Tibial artery (tissue), 4 donors: ENCODE measurements at regions of chr5 and their contacts with region 1.

Region 1: DNA sequence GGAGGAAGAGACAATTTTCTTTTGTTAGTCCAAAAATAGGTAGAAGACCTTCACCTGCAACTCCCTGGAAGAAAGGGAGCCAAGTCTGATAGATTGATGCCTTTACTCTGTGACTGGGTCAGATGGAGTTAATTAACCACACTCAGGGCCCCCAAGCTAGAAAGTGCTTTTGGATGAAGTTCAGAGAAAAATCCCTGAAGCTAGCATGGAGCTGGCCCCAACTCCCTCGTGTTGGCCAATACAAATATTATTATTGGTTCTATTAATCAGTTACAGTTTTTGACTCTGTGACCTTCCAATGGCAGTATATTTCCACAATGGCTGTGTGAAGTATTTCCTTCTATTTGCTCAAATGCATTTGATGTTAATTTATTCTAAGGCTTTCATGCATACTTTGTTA is 1753.5 kb downstream of the EFNA5 start:
- DNase-seq: no peak
- H3K4me3 ChIP-seq: no peak overlapping the region
- H3K27ac ChIP-seq: no peak overlapping the region
- H3K4me1 ChIP-seq: no peaks in the 10 kb centered on the region
- H3K27me3 ChIP-seq: no peaks in the 10 kb centered on the region
- CTCF ChIP-seq: no peak

Region 2: DNA sequence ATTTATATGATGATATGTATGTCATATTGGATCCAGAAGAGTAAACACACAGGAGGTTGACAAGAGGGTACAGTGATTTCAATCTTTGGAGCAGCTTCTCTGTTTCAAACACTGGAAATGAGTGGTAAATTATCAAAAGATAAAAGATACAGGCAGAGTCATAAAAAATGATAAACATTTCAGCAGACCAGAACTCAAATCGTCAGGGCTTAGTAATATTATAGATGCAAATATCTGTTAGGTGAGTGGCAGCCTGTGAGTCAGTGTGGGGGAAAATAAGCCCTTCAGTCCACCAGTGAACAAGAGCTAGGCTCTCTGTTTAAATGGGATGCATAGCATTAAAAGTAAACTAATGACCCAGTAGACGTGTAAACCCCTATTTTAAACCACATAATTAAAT is 375.5 kb after region 1 on chr5:
- intact Hi-C with region 1: loop called (anchors 5 kb)
- DNase-seq: no peak
- H3K4me3 ChIP-seq: no peak overlapping the region
- H3K27ac ChIP-seq: no peak overlapping the region
- H3K4me1 ChIP-seq: no peaks in the 10 kb centered on the region
- H3K27me3 ChIP-seq: no peaks in the 10 kb centered on the region
- CTCF ChIP-seq: no peak

Region 3: GRCh38 chr5:106474066-106474465 is 556.9 kb after region 1 on chr5:
- intact Hi-C with region 1: no loop called
- DNase-seq: no peak
- H3K4me3 ChIP-seq: no peak overlapping the region
- H3K27ac ChIP-seq: no peak overlapping the region
- H3K4me1 ChIP-seq: peaks cover 0 to 10% (median 0%) of the 10 kb centered on the region in 4 donors
- H3K27me3 ChIP-seq: no peaks in the 10 kb centered on the region
- CTCF ChIP-seq: no peak